ENCODE measurements at regions of chr6 and their contacts with region 1.

Region 1: GRCh38 chr6:3251462-3252314 is 7.1 kb upstream of the PSMG4 start:
- DNase-seq: peak; percentile 77
- ATAC-seq: peak; percentile 78
- H3K4me3 ChIP-seq: peak overlapping the region; percentile 6 to 57 (median 20); a peak in 4 of 6 replicates
- H3K27ac ChIP-seq: no peak overlapping the region
- H3K4me1 ChIP-seq: peaks cover 46% of the 10 kb centered on the region
- H3K27me3 ChIP-seq: peaks cover 1 to 50% of the 10 kb centered on the region in 2 experiments; a peak in 3 of 5 replicates
- CTCF ChIP-seq: peak; percentile 96
- EP300 ChIP-seq: peak in 1 of 2 experiments; percentile 35; a peak in 1 of 4 replicates
- POLR2A ChIP-seq: no peak
- RAD21 ChIP-seq: peak; percentile 89

Region 2: GRCh38 chr6:1645470-1646185 is 1606.1 kb before region 1 on chr6:
- CTCF ChIA-PET with region 1: no interaction called
- POLR2A ChIA-PET with region 1: no interaction called
- in situ Hi-C with region 1: no loop called
- intact Hi-C with region 1: no loop called
- DNase-seq: no peak
- ATAC-seq: no peak
- H3K4me3 ChIP-seq: no peak overlapping the region
- H3K27ac ChIP-seq: no peak overlapping the region
- H3K4me1 ChIP-seq: no peaks in the 10 kb centered on the region
- H3K27me3 ChIP-seq: no peaks in the 10 kb centered on the region
- CTCF ChIP-seq: no peak
- EP300 ChIP-seq: no peak
- POLR2A ChIP-seq: no peak
- RAD21 ChIP-seq: no peak

Region 3: GRCh38 chr6:2999618-3000557 is 251.8 kb before region 1 on chr6 and contains the start of gene NQO2:
- CTCF ChIA-PET with region 1: no interaction called
- POLR2A ChIA-PET with region 1: interaction called, 4 read pairs
- in situ Hi-C with region 1: loop called (anchors 10 kb)
- intact Hi-C with region 1: loop called (anchors 5 kb)
- DNase-seq: peak; percentile 76
- ATAC-seq: peak; percentile 79
- H3K4me3 ChIP-seq: peak within 1 kb of the TSS; percentile 91 to 100 (median 100)
- H3K27ac ChIP-seq: peak within 1 kb of the TSS; percentile 92
- H3K4me1 ChIP-seq: peaks cover 44% of the 10 kb centered on the region
- H3K27me3 ChIP-seq: no peaks in the 10 kb centered on the region; a peak in 1 of 5 replicates
- CTCF ChIP-seq: peak; percentile 27; the same call in 1 of the 2 replicates
- EP300 ChIP-seq: 0 out of 4 replicates have a peak, but pooled peaks of 1 of the 2 experiments have one; percentile 14
- POLR2A ChIP-seq: peak; percentile 95 to 98
- RAD21 ChIP-seq: peak; percentile 58
- total RNA-seq, gene NQO2: 56.5 and 63.0 TPM in 2 replicates

Region 4: DNA sequence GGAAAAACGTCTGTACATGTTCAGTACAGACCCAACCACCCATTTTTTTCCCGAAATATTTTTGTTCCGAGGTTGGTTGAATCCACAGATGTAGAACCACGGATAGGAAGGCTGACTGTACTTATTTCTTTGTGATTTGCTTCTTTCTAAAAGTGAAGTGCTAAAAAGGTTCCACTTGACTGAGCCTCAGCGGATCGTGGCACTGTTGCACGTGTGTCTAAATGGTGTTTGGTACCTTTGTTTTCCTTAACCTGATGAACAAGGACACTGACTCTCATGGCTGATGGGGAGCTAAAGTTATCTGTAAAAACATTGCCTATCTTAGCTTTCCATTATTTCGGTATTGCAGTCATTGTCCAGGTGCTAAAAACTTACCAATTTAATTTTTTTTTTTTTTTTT is 127.0 kb before region 1 on chr6:
- CTCF ChIA-PET with region 1: interaction called, 20 read pairs
- POLR2A ChIA-PET with region 1: interaction called, 7 read pairs
- in situ Hi-C with region 1: no loop called
- intact Hi-C with region 1: loop called (anchors 1 kb)
- DNase-seq: no peak
- ATAC-seq: no peak
- H3K4me3 ChIP-seq: no peak overlapping the region
- H3K27ac ChIP-seq: no peak overlapping the region
- H3K4me1 ChIP-seq: peaks cover 28% of the 10 kb centered on the region
- H3K27me3 ChIP-seq: no peaks in the 10 kb centered on the region
- CTCF ChIP-seq: no peak
- EP300 ChIP-seq: no peak
- POLR2A ChIP-seq: no peak
- RAD21 ChIP-seq: no peak

Region 5: GRCh38 chr6:3157131-3157927 is 94.4 kb before region 1 on chr6 and contains the start of gene TUBB2A:
- CTCF ChIA-PET with region 1: interaction called, 3 read pairs
- POLR2A ChIA-PET with region 1: interaction called, 14 read pairs
- in situ Hi-C with region 1: no loop called
- intact Hi-C with region 1: loop called (anchors 2 kb)
- DNase-seq: peak; percentile 56
- ATAC-seq: peak; percentile 78
- H3K4me3 ChIP-seq: peak within 1 kb of the TSS; percentile 63 to 91 (median 70)
- H3K27ac ChIP-seq: peak within 1 kb of the TSS; percentile 57
- H3K4me1 ChIP-seq: peaks cover 45% of the 10 kb centered on the region
- H3K27me3 ChIP-seq: no peaks in the 10 kb centered on the region
- CTCF ChIP-seq: peak; percentile 76
- EP300 ChIP-seq: peak in 1 of 2 experiments; percentile 14; a peak in 1 of 4 replicates
- POLR2A ChIP-seq: peak; percentile 78 to 96
- RAD21 ChIP-seq: peak; percentile 93
- total RNA-seq, gene TUBB2A: 35.3 and 38.1 TPM in 2 replicates

Region 6: DNA sequence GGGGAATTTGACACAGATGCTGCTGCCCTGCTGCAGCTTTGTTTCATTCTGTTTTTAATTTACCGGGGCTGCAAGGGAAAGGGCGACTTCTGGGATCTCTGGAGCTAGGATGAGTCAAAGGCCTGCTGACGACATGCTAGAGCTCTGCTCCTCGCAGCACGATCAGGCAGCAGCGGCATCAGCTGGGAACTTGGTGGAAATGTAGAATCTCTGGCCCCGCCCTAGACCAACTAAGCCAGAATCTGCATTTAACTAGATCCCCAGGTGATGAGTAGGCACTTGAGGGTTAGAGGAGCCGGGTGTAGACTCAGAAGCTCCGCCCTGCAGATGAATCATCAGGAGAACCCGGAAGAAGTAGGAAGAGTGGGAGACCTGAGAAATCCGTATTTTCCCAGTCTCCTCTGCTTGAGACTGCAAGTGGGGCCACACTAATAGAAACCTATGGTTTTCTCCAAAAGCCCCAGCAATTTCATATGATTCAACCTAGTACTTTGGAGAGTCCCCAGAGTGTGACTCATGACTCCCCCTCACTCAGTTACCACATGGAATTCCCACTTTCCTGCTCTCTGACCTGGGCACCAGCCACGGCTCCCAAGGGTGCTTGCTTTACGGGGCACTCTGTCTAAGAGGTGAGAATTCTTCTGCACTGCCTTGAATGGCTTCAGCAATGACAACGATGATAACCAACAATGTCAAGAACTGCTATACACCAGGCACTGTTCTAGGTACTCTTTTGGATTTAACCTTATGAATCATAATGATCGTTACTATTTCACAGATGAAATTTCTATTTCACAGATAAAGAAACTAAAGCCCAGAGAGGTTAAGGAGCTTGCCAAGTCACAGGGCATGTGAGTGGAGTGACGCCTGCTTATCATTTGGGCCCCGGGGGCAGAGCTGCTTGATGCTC is 42.3 kb before region 1 on chr6:
- CTCF ChIA-PET with region 1: no interaction called
- POLR2A ChIA-PET with region 1: interaction called, 9 read pairs
- in situ Hi-C with region 1: no loop called
- intact Hi-C with region 1: loop called (anchors 5 kb)
- DNase-seq: peak; percentile 88
- ATAC-seq: peak; percentile 90
- H3K4me3 ChIP-seq: peak overlapping the region in 2 of 3 experiments; percentile 3 to 35; a peak in 4 of 6 replicates
- H3K27ac ChIP-seq: no peak overlapping the region
- H3K4me1 ChIP-seq: peaks cover 23% of the 10 kb centered on the region
- H3K27me3 ChIP-seq: peaks cover 9 to 65% of the 10 kb centered on the region in 2 experiments; a peak in 4 of 5 replicates
- CTCF ChIP-seq: peak; percentile 71
- EP300 ChIP-seq: peak in 1 of 2 experiments; percentile 9; a peak in 1 of 4 replicates
- POLR2A ChIP-seq: no peak
- RAD21 ChIP-seq: 0 out of 2 replicates have a peak, but pooled peaks have one; percentile 20